ENCODE measurements at regions of chr1 and their contacts with region 1.

Region 1: DNA sequence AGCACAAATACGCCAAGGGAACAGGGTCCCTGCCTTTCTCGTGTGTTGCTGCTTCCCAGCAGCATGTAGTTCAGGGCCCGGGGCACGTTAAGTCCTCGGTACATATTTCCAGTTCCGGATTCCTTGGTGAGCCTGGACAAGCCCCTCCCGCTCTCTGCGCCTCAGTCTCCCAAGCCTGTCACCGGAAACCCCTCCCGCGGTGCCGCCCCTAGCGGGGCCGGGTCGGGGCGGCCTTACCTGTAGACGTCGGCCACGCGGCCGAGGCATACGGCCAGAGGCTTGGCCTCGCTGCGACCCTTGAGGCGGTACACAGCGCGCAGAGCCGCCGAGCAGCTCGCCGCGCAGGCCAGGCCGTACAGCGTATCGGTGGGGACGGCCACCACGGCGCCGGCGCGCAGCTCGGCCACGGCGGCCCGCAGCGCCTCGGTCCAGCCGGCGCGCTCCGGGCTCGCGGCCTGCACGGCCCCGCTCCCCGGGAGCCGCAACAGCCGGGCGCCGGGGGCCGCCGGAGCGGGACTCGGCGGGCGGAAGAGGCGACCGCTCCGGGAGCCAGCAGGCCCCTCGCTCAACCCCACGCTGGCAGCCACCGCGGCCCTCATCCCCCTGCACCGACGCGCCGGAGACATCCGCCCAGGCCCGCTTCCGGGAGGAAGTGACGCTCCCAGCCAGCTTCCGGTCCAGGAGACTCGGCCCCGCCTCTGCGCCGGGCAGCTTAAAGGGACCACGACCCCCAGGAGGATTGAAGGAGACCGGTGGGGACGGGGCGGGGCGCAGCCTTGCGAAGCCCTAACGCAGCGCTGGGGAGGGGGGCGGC is at the starts of genes C1orf122 and YRDC:
- DNase-seq: peak; percentile 95
- ATAC-seq: peak; percentile 94
- H3K4me3 Mint-ChIP-seq: peak within 1 kb of the TSS; percentile 83
- H3K27ac Mint-ChIP-seq: peak within 1 kb of the TSS; percentile 91
- H3K4me1 Mint-ChIP-seq: peaks cover 34% of the 10 kb centered on the region
- H3K27me3 Mint-ChIP-seq: no peaks in the 10 kb centered on the region
- CTCF ChIP-seq: no peak
- total RNA-seq, gene C1orf122: 17.4 to 17.9 TPM
- total RNA-seq, gene YRDC: 36.2 to 37.1 TPM

Region 2: DNA sequence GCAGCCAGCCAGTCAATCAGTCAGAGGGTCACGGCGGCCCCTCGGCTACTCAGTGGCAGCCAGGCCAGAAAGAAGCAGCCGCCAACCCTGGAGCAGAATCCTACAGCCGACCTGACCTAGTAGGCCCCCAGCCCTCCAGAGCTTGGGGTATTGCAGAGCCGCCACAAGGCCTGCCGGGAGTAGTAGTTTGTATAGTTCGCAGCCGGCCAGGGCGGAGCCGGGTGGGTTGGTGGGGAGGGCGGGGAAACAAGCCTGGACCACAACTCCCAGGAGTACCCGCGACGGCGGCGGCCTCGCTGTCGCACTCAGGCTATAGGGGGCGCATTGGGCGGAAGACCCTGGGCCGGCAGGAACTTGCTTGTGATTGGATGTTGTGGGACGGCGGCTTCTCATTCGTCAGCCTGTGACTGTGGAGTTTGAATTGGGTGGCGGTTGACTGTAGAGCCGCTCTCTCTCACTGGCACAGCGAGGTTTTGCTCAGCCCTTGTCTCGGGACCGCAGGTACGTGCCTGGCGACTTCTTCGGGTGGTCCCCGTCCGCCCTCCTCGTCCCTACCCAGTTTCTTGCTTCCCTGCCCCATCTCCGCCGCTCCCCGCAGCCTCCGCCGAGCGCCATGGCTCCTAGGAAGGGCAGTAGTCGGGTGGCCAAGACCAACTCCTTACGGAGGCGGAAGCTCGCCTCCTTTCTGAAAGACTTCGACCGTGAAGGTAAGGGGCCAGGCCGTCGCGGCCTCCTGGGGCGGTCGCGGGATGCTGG is 115.5 kb before region 1 on chr1 and contains the start of gene CDCA8:
- CTCF ChIA-PET with region 1: interaction called, 5 read pairs
- POLR2A ChIA-PET with region 1: interaction called, 13 read pairs
- intact Hi-C with region 1: no loop called
- DNase-seq: peak; percentile 99
- ATAC-seq: peak; percentile 90
- H3K4me3 Mint-ChIP-seq: peak within 1 kb of the TSS; percentile 98
- H3K27ac Mint-ChIP-seq: peak within 1 kb of the TSS; percentile 93
- H3K4me1 Mint-ChIP-seq: peaks cover 31% of the 10 kb centered on the region
- H3K27me3 Mint-ChIP-seq: no peaks in the 10 kb centered on the region
- CTCF ChIP-seq: no peak
- total RNA-seq, gene CDCA8: 53.7 to 56.0 TPM

Region 3: DNA sequence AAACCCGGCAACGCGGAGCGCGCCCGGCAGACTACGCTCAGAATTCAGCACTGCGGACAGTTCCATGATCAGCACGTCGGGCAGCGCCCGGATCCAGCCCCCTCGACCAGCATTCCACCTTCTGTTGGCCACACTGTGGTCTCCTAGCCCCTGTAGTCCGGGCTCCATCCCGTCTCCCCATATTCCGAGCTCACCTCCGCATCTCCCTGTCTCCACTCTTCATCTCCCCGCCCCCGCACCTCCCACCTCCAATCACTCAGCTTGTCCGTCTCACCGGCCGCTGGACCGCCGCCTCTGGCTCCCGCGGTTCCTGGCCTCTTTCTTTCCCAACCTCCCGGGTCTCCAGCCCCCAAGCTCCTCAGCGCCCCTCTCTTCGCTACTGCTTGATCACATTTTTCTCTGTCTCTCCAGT is 43.3 kb before region 1 on chr1:
- CTCF ChIA-PET with region 1: no interaction called
- POLR2A ChIA-PET with region 1: interaction called, 18 read pairs
- intact Hi-C with region 1: loop called (anchors 5 kb)
- DNase-seq: peak; percentile 71
- ATAC-seq: peak; percentile 61
- H3K4me3 Mint-ChIP-seq: no peak overlapping the region
- H3K27ac Mint-ChIP-seq: no peak overlapping the region
- H3K4me1 Mint-ChIP-seq: peaks cover 17% of the 10 kb centered on the region
- H3K27me3 Mint-ChIP-seq: peaks cover 62% of the 10 kb centered on the region
- CTCF ChIP-seq: no peak

Measured in activated CD8-positive, alpha-beta T cell treated with anti-CD3 and anti-CD28 coated beads for 36 hours (primary cell).